Tibial artery (tissue), 4 donors: ENCODE measurements at regions of chr6 and their contacts with region 1.

Region 1: GRCh38 chr6:85642774-85643536 is at the start of gene SYNCRIP:
- DNase-seq: peak; percentile 98 to 100
- H3K4me3 ChIP-seq: peak within 1 kb of the TSS; percentile 90 to 99
- H3K27ac ChIP-seq: peak within 1 kb of the TSS; percentile 98 to 99
- H3K4me1 ChIP-seq: peaks cover 0 to 44% (median 31%) of the 10 kb centered on the region in 4 donors
- H3K27me3 ChIP-seq: no peaks in the 10 kb centered on the region
- CTCF ChIP-seq: no peak

Region 2: DNA sequence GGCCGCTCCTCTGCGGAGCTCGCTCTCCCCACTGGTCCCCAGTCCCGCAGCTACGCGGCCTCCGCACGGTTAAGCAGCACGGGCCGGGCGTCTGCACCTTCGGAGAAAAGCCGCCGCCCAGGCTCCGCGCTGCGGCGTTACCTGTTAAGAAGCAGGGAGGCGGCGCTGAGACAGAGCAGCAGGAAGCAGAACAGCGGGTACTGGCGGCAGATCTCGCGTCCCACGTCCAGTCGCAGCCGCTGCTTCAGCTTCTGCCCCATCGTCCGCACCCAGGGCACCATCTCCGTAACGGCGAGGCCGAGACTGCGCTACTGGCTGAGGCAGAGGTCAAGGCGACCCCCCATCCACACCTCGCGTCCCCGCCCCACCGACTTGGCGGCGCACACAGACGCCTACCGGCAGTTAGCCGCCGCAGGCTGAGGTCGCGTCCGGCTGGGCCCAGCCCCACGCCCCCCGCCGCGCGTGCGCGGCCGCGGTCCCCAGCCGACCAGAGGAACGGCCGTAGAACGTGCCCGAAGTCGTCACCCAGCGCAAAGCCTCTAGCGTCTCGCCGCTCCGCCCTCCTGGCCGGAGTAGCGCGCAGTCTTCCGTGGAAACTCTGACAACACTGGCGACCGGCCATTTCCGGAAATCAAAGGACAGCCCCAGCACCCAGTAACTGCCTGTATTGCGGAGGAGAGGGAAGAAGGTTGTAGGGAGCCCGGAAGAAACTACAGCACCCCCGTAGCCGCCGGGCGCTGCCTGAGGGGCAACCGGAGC is 49.3 kb before region 1 on chr6 and contains the start of gene SNX14:
- intact Hi-C with region 1: loop called (anchors 5 kb)
- DNase-seq: peak; percentile 93 to 97
- H3K4me3 ChIP-seq: peak within 1 kb of the TSS; percentile 75 to 93
- H3K27ac ChIP-seq: peak within 1 kb of the TSS; percentile 91 to 93
- H3K4me1 ChIP-seq: peaks cover 0 to 31% (median 15%) of the 10 kb centered on the region in 4 donors
- H3K27me3 ChIP-seq: no peaks in the 10 kb centered on the region
- CTCF ChIP-seq: peak; percentile 11 to 19

Region 3: DNA sequence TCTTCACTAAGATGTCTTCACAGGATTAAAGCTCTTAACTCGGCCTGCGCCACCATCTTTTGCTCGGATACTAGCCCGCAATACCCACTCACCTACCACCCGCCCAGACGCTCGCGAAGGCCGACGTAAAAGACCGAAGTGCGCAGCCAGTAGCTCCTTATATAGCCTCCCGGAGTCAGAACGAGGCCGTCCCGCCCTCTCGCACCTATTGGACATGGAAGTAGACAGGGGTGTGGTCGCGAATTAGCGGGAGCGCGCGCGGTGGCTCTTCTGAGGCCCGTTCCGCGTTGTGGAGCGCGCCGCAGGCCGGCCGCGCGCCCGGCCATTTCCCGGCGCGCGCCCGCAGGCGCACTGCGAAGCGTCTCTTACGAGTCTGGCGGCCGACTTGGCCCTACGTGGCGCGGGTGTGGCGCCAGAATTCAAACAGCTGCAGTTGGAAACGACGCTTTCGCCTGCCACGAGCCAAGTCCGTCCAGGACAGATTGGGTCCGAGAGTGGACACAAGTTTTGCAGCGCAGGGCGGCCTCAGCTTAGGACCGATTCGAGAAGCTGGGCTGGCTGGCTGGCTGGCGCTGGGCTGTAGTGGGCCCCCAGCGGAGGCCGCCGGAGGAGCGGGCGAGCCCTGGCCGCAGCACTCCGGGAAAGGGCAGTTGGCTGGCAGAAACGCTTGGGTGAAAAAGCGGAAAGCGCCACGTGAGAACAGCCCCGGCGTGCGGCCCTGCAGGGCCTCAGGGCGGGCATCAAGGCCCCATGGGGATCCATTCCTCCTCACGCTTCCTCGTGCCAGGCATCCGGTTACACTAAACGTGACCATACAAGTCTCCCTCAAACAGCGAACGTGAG is 35.9 kb after region 1 on chr6:
- intact Hi-C with region 1: loop called (anchors 2 kb)
- DNase-seq: peak; percentile 98 to 99
- H3K4me3 ChIP-seq: peak overlapping the region; percentile 82 to 87
- H3K27ac ChIP-seq: peak overlapping the region; percentile 89 to 91
- H3K4me1 ChIP-seq: peaks cover 0 to 31% (median 15%) of the 10 kb centered on the region in 4 donors
- H3K27me3 ChIP-seq: no peaks in the 10 kb centered on the region
- CTCF ChIP-seq: no peak

Region 4: DNA sequence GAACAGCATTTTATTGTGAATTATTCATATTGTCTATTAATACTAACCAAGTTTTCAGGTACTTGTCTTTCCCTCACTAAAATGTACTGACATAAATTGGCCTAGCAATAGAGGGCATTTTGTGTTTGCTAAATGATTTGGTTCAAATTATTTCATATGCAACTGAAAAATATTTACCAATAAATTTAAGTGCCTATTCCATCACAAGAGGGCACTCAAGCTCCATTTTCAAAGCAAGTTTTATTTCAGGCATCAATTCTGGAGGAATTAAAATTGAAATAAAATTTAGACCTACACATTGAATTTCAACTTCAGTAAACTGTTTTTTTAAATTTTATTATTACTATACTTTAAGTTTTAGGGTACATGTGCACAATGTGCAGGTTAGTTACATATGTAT is 114.0 kb after region 1 on chr6:
- intact Hi-C with region 1: no loop called
- DNase-seq: no peak
- H3K4me3 ChIP-seq: no peak overlapping the region
- H3K27ac ChIP-seq: no peak overlapping the region
- H3K4me1 ChIP-seq: no peaks in the 10 kb centered on the region
- H3K27me3 ChIP-seq: no peaks in the 10 kb centered on the region
- CTCF ChIP-seq: peak; percentile 15 to 45